ENCODE measurements at regions of chr16 and their contacts with region 1.

Region 1: GRCh38 chr16:72241930-72242329 is 70.0 kb upstream of the PMFBP1 start:
- DNase-seq: peak in 1 of 2 experiments; percentile 61
- H3K4me3 ChIP-seq: no peak overlapping the region
- H3K4me3 Mint-ChIP-seq: no peak overlapping the region
- H3K27ac Mint-ChIP-seq: no peak overlapping the region
- H3K4me1 ChIP-seq: no peaks in the 10 kb centered on the region
- H3K4me1 Mint-ChIP-seq: no peaks in the 10 kb centered on the region
- H3K27me3 ChIP-seq: no peaks in the 10 kb centered on the region
- H3K27me3 Mint-ChIP-seq: peaks cover 3% of the 10 kb centered on the region
- CTCF ChIP-seq: peak; percentile 84 to 95

Region 2: GRCh38 chr16:71894921-71895678 is 346.8 kb before region 1 on chr16 and contains the start of gene IST1:
- CTCF ChIA-PET with region 1: interaction called, 10 read pairs
- POLR2A ChIA-PET with region 1: no interaction called
- intact Hi-C with region 1: no loop called
- DNase-seq: peak; percentile 99
- H3K4me3 ChIP-seq: peak within 1 kb of the TSS; percentile 79
- H3K4me3 Mint-ChIP-seq: peak within 1 kb of the TSS; percentile 79
- H3K27ac Mint-ChIP-seq: peak within 1 kb of the TSS; percentile 89
- H3K4me1 ChIP-seq: peaks cover 5% of the 10 kb centered on the region; the same call in 1 of the 2 replicates
- H3K4me1 Mint-ChIP-seq: no peaks in the 10 kb centered on the region
- H3K27me3 ChIP-seq: no peaks in the 10 kb centered on the region
- H3K27me3 Mint-ChIP-seq: no peaks in the 10 kb centered on the region
- CTCF ChIP-seq: no peak
- total RNA-seq, gene IST1: 310 and 331 TPM in 2 replicates

Region 3: DNA sequence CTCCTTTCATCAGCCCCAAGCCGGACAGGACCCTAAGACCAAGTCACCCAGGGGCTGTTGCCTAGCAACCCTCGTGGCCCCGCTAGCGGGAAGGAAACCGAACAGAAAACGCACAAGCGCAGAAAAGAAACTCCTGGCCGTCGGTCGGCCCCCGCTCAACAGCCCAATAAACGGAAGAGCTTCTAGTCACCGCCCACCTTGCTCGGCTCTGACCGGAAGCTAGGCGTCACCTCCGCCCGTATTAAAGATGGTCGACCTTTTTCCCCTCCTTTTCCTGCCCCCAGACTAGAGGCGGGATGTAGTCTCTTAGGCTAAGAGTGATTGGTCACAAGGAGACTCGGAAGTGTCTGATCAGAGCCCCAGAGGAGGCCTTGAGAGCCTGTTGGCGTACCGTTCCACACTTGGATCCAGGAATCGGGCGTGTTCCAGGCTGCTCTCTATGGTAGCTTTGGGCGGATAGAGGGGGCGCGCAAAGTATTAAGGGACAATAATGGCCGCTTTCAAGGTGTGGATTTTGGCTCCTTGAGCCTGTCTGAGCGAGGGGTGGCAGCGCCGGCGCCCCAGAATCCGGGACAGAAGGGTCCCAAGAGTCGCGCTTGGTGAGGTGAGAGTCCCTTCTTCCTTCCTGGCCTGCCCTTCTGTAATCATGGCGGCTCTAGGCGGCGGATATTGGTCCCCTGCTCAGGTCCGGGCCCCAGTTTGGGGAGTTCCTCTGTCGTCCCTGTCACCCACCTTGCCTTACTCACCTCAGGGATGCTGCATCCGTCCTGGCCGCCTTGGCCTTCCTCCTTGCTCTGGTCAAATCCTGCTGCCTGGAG is 148.3 kb before region 1 on chr16 and contains the starts of genes DHX38 and TXNL4B:
- CTCF ChIA-PET with region 1: interaction called, 18 read pairs
- POLR2A ChIA-PET with region 1: no interaction called
- intact Hi-C with region 1: no loop called
- DNase-seq: peak; percentile 96 to 98
- H3K4me3 ChIP-seq: peak within 1 kb of the TSS; percentile 72
- H3K4me3 Mint-ChIP-seq: peak within 1 kb of the TSS; percentile 95
- H3K27ac Mint-ChIP-seq: peak within 1 kb of the TSS; percentile 97
- H3K4me1 ChIP-seq: 0 out of 2 replicates have a peak, but pooled peaks cover 9% of the 10 kb centered on the region
- H3K4me1 Mint-ChIP-seq: peaks cover 18% of the 10 kb centered on the region
- H3K27me3 ChIP-seq: no peaks in the 10 kb centered on the region
- H3K27me3 Mint-ChIP-seq: no peaks in the 10 kb centered on the region
- CTCF ChIP-seq: no peak
- total RNA-seq, gene DHX38: 89.1 and 92.1 TPM in 2 replicates
- total RNA-seq, gene TXNL4B: 17.9 and 18.4 TPM in 2 replicates

Region 4: GRCh38 chr16:72124761-72125634 is 116.9 kb before region 1 on chr16:
- CTCF ChIA-PET with region 1: interaction called, 5 read pairs
- POLR2A ChIA-PET with region 1: no interaction called
- intact Hi-C with region 1: loop called (anchors 1 kb)
- DNase-seq: peak; percentile 71 to 81
- H3K4me3 ChIP-seq: no peak overlapping the region
- H3K4me3 Mint-ChIP-seq: no peak overlapping the region
- H3K27ac Mint-ChIP-seq: no peak overlapping the region
- H3K4me1 ChIP-seq: peaks cover 6% of the 10 kb centered on the region; the same call in 1 of the 2 replicates
- H3K4me1 Mint-ChIP-seq: no peaks in the 10 kb centered on the region
- H3K27me3 ChIP-seq: no peaks in the 10 kb centered on the region
- H3K27me3 Mint-ChIP-seq: peaks cover 4% of the 10 kb centered on the region
- CTCF ChIP-seq: peak; percentile 90 to 92

Region 5: DNA sequence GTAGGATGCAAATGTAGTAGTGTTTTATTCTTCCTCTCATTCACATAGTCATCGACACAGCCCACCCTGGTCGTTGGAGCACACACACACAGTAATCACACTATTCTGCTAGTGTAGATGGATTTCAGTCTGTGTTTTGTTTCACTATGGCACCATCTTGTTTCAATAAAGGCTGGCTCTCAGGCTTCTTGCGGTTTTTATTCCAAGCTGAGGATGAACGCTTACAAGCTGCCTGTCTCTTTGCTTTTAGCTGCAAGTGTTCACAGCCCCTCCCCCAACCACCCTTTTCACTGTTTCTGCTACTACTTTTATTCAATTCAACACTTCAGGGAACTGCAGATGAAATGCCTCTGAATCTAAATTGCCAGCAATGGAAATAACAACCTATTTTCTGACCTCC is 70.9 kb after region 1 on chr16:
- CTCF ChIA-PET with region 1: no interaction called
- POLR2A ChIA-PET with region 1: no interaction called
- intact Hi-C with region 1: loop called (anchors 5 kb)
- DNase-seq: no peak
- H3K4me3 ChIP-seq: no peak overlapping the region
- H3K4me3 Mint-ChIP-seq: no peak overlapping the region
- H3K27ac Mint-ChIP-seq: no peak overlapping the region
- H3K4me1 ChIP-seq: no peaks in the 10 kb centered on the region; the same call in 1 of the 2 replicates
- H3K4me1 Mint-ChIP-seq: no peaks in the 10 kb centered on the region
- H3K27me3 ChIP-seq: no peaks in the 10 kb centered on the region
- H3K27me3 Mint-ChIP-seq: no peaks in the 10 kb centered on the region
- CTCF ChIP-seq: no peak

Region 6: DNA sequence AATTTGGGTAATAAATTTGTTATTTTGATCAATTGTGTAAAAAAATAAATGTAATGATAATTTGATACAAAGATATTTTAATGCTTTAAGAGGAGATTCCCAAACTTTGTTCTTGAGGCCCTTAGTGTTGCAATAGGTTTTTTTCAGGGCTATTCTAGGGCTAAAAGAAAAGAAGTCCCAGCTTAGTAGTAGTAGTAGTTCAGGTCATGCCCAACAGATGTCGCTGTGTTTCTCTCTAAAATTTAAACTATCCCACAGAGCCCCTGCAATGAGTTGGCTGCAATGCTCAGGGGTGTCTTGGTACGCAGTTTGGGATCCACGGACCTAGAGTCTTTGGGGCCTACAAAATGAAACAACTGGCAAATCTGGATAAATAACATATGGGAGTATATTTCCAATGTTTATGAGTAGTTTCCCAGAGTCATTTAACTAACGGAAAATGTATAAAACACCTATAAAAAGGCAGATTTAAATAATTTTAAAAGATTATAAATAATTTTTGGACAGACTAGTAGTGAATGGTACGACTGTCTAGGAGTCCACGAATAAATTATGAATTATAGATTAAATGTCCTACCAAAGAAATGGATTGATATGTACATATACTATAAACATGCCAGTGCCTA is 158.4 kb after region 1 on chr16:
- CTCF ChIA-PET with region 1: interaction called, 3 read pairs
- POLR2A ChIA-PET with region 1: no interaction called
- intact Hi-C with region 1: loop called (anchors 2 kb)
- DNase-seq: peak; percentile 49 to 65
- H3K4me3 ChIP-seq: no peak overlapping the region
- H3K4me3 Mint-ChIP-seq: no peak overlapping the region
- H3K27ac Mint-ChIP-seq: no peak overlapping the region
- H3K4me1 ChIP-seq: no peaks in the 10 kb centered on the region
- H3K4me1 Mint-ChIP-seq: no peaks in the 10 kb centered on the region
- H3K27me3 ChIP-seq: no peaks in the 10 kb centered on the region
- H3K27me3 Mint-ChIP-seq: no peaks in the 10 kb centered on the region
- CTCF ChIP-seq: peak; percentile 82 to 83

Region 7: GRCh38 chr16:72467157-72467759 is 225.3 kb after region 1 on chr16:
- CTCF ChIA-PET with region 1: interaction called, 23 read pairs
- POLR2A ChIA-PET with region 1: no interaction called
- intact Hi-C with region 1: loop called (anchors 1 kb)
- DNase-seq: peak in 1 of 2 experiments; percentile 53
- H3K4me3 ChIP-seq: no peak overlapping the region
- H3K4me3 Mint-ChIP-seq: no peak overlapping the region
- H3K27ac Mint-ChIP-seq: no peak overlapping the region
- H3K4me1 ChIP-seq: no peaks in the 10 kb centered on the region
- H3K4me1 Mint-ChIP-seq: no peaks in the 10 kb centered on the region
- H3K27me3 ChIP-seq: no peaks in the 10 kb centered on the region
- H3K27me3 Mint-ChIP-seq: no peaks in the 10 kb centered on the region
- CTCF ChIP-seq: peak; percentile 67 to 84

Measured in Caco-2 (cell line).